K562 (cell line): ENCODE measurements at regions of chr7 and their contacts with region 1.

Region 1: GRCh38 chr7:66033471-66034385 is 41.9 kb upstream of the ASL start:
- DNase-seq: no peak
- ATAC-seq: no peak
- H3K4me3 ChIP-seq: no peak overlapping the region
- H3K27ac ChIP-seq: no peak overlapping the region
- H3K4me1 ChIP-seq: no peaks in the 10 kb centered on the region
- H3K27me3 ChIP-seq: peaks cover 3 to 13% of the 10 kb centered on the region in 2 experiments; a peak in 3 of 5 replicates
- CTCF ChIP-seq: no peak
- EP300 ChIP-seq: no peak
- POLR2A ChIP-seq: no peak
- RAD21 ChIP-seq: no peak

Region 2: GRCh38 chr7:66204822-66205740 is 171.4 kb after region 1 on chr7 and contains the start of gene TPST1:
- CTCF ChIA-PET with region 1: no interaction called
- POLR2A ChIA-PET with region 1: no interaction called
- in situ Hi-C with region 1: no loop called
- intact Hi-C with region 1: loop called (anchors 10 kb)
- DNase-seq: peak; percentile 89 to 99 (median 99)
- ATAC-seq: peak; percentile 99
- H3K4me3 ChIP-seq: peak within 1 kb of the TSS; percentile 55
- H3K27ac ChIP-seq: no peak within 1 kb of the TSS
- H3K4me1 ChIP-seq: peaks cover 3 to 13% of the 10 kb centered on the region in 2 experiments; a peak in 3 of 5 replicates
- H3K27me3 ChIP-seq: peaks cover 28 to 43% of the 10 kb centered on the region in 2 experiments
- CTCF ChIP-seq: peak; percentile 59 to 87 (median 59)
- EP300 ChIP-seq: no peak
- POLR2A ChIP-seq: no peak
- RAD21 ChIP-seq: peak in 1 of 2 experiments; percentile 45; a peak in 2 of 4 replicates
- polyA plus RNA-seq, gene TPST1: 0.15 to 0.30 TPM

Region 3: GRCh38 chr7:66221442-66221841 is 187.7 kb after region 1 on chr7:
- CTCF ChIA-PET with region 1: no interaction called
- POLR2A ChIA-PET with region 1: no interaction called
- in situ Hi-C with region 1: no loop called
- intact Hi-C with region 1: no loop called
- DNase-seq: no peak
- ATAC-seq: no peak
- H3K4me3 ChIP-seq: no peak overlapping the region
- H3K27ac ChIP-seq: no peak overlapping the region
- H3K4me1 ChIP-seq: no peaks in the 10 kb centered on the region
- H3K27me3 ChIP-seq: peaks cover 13 to 20% of the 10 kb centered on the region in 2 experiments
- CTCF ChIP-seq: no peak
- EP300 ChIP-seq: no peak
- POLR2A ChIP-seq: no peak
- RAD21 ChIP-seq: no peak

Region 4: GRCh38 chr7:66315192-66315591 is 281.5 kb after region 1 on chr7:
- CTCF ChIA-PET with region 1: no interaction called
- POLR2A ChIA-PET with region 1: no interaction called
- in situ Hi-C with region 1: no loop called
- intact Hi-C with region 1: loop called (anchors 10 kb)
- DNase-seq: no peak
- ATAC-seq: peak; percentile 76
- H3K4me3 ChIP-seq: no peak overlapping the region
- H3K27ac ChIP-seq: no peak overlapping the region
- H3K4me1 ChIP-seq: no peaks in the 10 kb centered on the region
- H3K27me3 ChIP-seq: peaks cover 8 to 12% of the 10 kb centered on the region in 2 experiments; a peak in 1 of 5 replicates
- CTCF ChIP-seq: no peak
- EP300 ChIP-seq: no peak
- POLR2A ChIP-seq: no peak
- RAD21 ChIP-seq: no peak

Region 5: DNA sequence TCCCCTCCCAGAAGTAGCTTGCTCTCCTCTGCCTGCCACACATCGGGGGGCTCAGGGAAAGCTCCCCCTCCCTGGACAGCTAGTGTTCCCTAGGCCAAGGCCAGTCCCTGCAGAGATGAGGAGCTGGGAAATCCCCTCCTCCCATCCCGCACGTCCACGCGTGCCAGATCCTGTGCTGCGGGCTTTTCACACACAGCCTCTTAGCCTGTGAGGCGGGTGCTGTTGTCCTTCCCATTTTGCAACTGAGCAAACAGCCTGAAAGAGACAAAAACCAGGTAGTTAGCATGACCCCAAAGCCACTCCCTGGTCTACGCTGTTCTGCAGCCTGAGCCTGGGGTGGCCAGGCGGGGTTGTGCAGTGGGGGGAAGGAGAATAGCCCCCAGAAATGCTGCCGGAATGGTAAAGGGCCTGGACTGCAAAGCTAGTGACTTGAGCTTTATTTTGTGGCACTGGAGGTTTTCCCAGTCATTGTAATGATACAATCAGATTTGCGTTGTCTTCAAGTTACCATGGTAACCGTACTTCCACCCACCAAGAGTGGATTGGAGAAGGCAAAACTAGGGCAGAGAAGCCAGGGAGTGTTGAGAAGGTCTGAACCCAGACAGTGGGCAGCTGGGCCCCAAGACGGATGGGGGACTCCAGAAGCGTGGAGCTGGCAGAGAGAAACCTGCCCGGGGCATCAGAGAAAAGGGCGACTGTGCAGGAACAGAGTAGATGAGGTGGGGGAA is 496.3 kb after region 1 on chr7:
- CTCF ChIA-PET with region 1: no interaction called
- POLR2A ChIA-PET with region 1: no interaction called
- in situ Hi-C with region 1: no loop called
- intact Hi-C with region 1: loop called (anchors 10 kb)
- DNase-seq: no peak
- ATAC-seq: no peak
- H3K4me3 ChIP-seq: no peak overlapping the region
- H3K27ac ChIP-seq: no peak overlapping the region
- H3K4me1 ChIP-seq: peaks cover 0 to 8% of the 10 kb centered on the region in 2 experiments; a peak in 1 of 5 replicates
- H3K27me3 ChIP-seq: no peaks in the 10 kb centered on the region
- CTCF ChIP-seq: no peak
- EP300 ChIP-seq: no peak
- POLR2A ChIP-seq: no peak
- RAD21 ChIP-seq: no peak

Region 6: GRCh38 chr7:67006971-67007370 is 973.2 kb after region 1 on chr7:
- CTCF ChIA-PET with region 1: no interaction called
- POLR2A ChIA-PET with region 1: no interaction called
- in situ Hi-C with region 1: no loop called
- intact Hi-C with region 1: loop called (anchors 10 kb)
- DNase-seq: peak in 1 of 4 experiments; percentile 25
- ATAC-seq: peak; percentile 90
- H3K4me3 ChIP-seq: no peak overlapping the region
- H3K27ac ChIP-seq: no peak overlapping the region
- H3K4me1 ChIP-seq: no peaks in the 10 kb centered on the region; a peak in 1 of 5 replicates
- H3K27me3 ChIP-seq: no peaks in the 10 kb centered on the region
- CTCF ChIP-seq: no peak
- EP300 ChIP-seq: no peak
- POLR2A ChIP-seq: no peak
- RAD21 ChIP-seq: no peak